T-cell (primary cell): ENCODE measurements at regions of chr6 and their contacts with region 1.

Region 1: GRCh38 chr6:110389689-110390382 is 25.5 kb downstream of the DDO start:
- DNase-seq: peak in 2 of 35 experiments; percentile 4 to 9
- ATAC-seq: peak in 2 of 4 experiments; percentile 26 to 49
- H3K4me3 ChIP-seq: no peak overlapping the region
- H3K4me3 Mint-ChIP-seq: peak overlapping the region in 1 of 3 donors; percentile 58
- H3K27ac ChIP-seq: peak overlapping the region; percentile 6
- H3K27ac Mint-ChIP-seq: peak overlapping the region; percentile 74 to 91
- H3K4me1 ChIP-seq: peaks cover 9 to 21% of the 10 kb centered on the region in 2 experiments
- H3K4me1 Mint-ChIP-seq: peaks cover 20 to 26% (median 22%) of the 10 kb centered on the region in 3 donors
- H3K27me3 ChIP-seq: no peaks in the 10 kb centered on the region
- H3K27me3 Mint-ChIP-seq: peaks cover 0 to 4% of the 10 kb centered on the region in 2 donors

Region 2: GRCh38 chr6:109705258-109705657 is 684.6 kb before region 1 on chr6:
- CTCF ChIA-PET with region 1: interaction called, 3 to 14 read pairs
- POLR2A ChIA-PET with region 1: no interaction called
- DNase-seq: peak; percentile 41 to 87 (median 67)
- ATAC-seq: peak; percentile 87 to 96 (median 90)
- H3K4me3 ChIP-seq: no peak overlapping the region
- H3K4me3 Mint-ChIP-seq: no peak overlapping the region
- H3K27ac ChIP-seq: no peak overlapping the region
- H3K27ac Mint-ChIP-seq: peak overlapping the region in 1 of 2 donors; percentile 11
- H3K4me1 ChIP-seq: peaks cover 3 to 4% of the 10 kb centered on the region in 2 experiments
- H3K4me1 Mint-ChIP-seq: peaks cover 30 to 42% (median 33%) of the 10 kb centered on the region in 3 donors
- H3K27me3 ChIP-seq: no peaks in the 10 kb centered on the region
- H3K27me3 Mint-ChIP-seq: no peaks in the 10 kb centered on the region

Region 3: DNA sequence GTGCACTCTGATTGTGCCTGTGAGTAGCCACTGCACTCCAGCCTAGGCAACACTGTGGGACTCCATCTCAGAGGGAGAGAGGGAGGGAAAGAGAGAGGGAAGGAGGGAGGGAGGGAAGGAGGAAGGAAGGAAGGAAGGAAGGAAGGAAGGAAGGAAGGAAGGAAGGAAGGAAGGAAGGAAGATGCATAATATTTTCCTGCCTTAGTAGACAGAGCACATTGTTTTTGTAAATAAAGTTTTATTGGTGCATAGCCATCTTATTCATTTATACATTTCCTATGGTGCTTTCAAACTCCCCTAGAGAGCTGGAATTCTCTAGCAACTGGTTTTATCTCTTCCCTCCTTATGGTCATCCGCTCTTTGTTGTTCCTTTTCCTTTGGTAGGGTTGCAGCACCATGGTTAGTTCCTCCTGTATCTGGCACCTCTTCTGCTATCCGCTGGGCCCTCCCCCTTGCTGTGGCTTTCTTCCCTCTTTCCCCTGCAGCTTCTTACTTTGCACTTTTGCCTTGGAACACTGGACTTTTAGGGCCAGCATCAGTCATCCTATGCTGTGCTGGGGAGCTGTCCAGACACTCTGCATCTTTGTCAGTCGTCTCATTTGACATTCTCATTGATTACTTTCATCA is 391.6 kb before region 1 on chr6:
- CTCF ChIA-PET with region 1: no interaction called
- POLR2A ChIA-PET with region 1: no interaction called
- DNase-seq: no peak
- ATAC-seq: no peak
- H3K4me3 ChIP-seq: no peak overlapping the region
- H3K4me3 Mint-ChIP-seq: no peak overlapping the region
- H3K27ac ChIP-seq: no peak overlapping the region
- H3K27ac Mint-ChIP-seq: no peak overlapping the region
- H3K4me1 ChIP-seq: no peaks in the 10 kb centered on the region
- H3K4me1 Mint-ChIP-seq: no peaks in the 10 kb centered on the region
- H3K27me3 ChIP-seq: peaks cover 2 to 13% of the 10 kb centered on the region in 2 experiments
- H3K27me3 Mint-ChIP-seq: peaks cover 29 to 30% of the 10 kb centered on the region in 2 donors

Region 4: DNA sequence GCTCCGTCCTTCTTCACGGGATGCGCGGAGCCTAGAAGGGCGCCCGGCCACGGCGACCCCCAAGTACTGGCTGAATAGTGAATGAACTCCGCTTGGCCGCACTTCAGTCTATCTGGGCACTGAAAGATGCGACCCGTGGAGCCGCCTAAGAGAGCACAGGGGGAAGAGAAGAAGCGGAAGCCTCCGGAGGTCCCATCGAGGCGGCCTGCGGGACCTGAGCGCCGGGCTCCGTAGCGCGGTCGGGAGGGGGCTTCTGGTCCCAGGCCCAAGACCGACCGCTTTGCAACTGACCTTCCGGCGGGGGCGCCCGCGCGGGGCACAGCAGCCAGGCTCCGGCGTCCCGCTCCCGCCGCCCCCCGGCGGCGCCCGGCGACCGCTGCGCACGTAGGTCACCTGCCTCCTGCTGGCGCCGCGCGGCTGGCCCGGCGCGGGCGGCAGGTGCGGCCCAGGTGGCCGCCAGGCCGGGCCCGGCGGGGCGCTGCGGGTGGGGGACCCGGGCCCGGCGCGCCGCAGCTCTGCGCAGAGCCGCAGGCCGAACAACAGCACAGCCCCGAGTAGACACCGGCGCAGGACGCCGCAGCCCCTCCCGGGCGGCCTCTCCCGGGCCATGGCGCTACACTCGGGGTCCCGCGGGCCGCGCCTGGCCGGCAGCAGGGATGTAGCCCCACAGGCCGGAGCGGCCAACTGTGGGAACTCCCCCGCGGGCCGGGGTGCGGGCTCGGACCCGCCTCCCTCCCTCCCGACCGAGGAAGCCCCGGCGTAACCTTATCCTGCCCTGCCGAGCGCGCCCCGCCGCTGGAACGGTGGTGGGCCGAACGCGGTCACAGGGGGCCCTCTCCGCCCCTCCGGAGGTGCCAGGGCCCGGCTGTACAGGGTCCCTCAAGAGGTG is 31.9 kb before region 1 on chr6 and contains the start of gene METTL24:
- CTCF ChIA-PET with region 1: no interaction called
- POLR2A ChIA-PET with region 1: no interaction called
- DNase-seq: peak in 9 of 35 experiments; percentile 2 to 24 (median 10)
- ATAC-seq: peak; percentile 59 to 77 (median 68)
- H3K4me3 ChIP-seq: peak within 1 kb of the TSS; percentile 49 to 74
- H3K4me3 Mint-ChIP-seq: peak within 1 kb of the TSS; percentile 77 to 83 (median 81)
- H3K27ac ChIP-seq: no peak within 1 kb of the TSS
- H3K27ac Mint-ChIP-seq: peak within 1 kb of the TSS; percentile 26 to 50
- H3K4me1 ChIP-seq: peaks cover 0 to 11% of the 10 kb centered on the region in 2 experiments
- H3K4me1 Mint-ChIP-seq: peaks cover 13 to 21% (median 17%) of the 10 kb centered on the region in 3 donors
- H3K27me3 ChIP-seq: peaks cover 0 to 25% of the 10 kb centered on the region in 2 experiments
- H3K27me3 Mint-ChIP-seq: peaks cover 44 to 57% of the 10 kb centered on the region in 2 donors
- total RNA-seq, gene METTL24: 0.30 to 0.47 (median 0.33) TPM in 3 of 5 donors, not detected in the others

Region 5: DNA sequence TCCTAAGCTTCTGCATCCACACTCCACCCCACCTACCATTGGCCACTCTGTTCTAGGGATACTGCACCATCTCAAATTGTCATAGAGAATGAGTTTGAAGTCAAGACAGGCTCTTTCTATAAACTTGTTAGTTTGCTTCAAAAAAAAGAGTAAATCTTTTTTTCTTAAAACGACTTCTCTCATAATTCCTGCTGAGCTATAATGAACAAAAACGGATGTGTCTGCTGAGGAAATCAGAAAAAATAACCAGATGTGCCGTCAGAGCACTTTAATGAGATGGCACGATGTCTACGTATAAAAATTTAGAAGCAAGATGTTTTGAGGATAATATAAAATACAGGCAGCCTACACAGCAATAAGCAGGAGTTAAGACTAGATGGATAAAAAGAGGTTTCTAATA is 49.5 kb after region 1 on chr6:
- CTCF ChIA-PET with region 1: no interaction called
- POLR2A ChIA-PET with region 1: no interaction called
- DNase-seq: no peak
- ATAC-seq: no peak
- H3K4me3 ChIP-seq: no peak overlapping the region
- H3K4me3 Mint-ChIP-seq: no peak overlapping the region
- H3K27ac ChIP-seq: no peak overlapping the region
- H3K27ac Mint-ChIP-seq: no peak overlapping the region
- H3K4me1 ChIP-seq: no peaks in the 10 kb centered on the region
- H3K4me1 Mint-ChIP-seq: no peaks in the 10 kb centered on the region
- H3K27me3 ChIP-seq: peaks cover 0 to under 1% of the 10 kb centered on the region in 2 experiments
- H3K27me3 Mint-ChIP-seq: peaks cover 6 to 10% of the 10 kb centered on the region in 2 donors

Region 6: DNA sequence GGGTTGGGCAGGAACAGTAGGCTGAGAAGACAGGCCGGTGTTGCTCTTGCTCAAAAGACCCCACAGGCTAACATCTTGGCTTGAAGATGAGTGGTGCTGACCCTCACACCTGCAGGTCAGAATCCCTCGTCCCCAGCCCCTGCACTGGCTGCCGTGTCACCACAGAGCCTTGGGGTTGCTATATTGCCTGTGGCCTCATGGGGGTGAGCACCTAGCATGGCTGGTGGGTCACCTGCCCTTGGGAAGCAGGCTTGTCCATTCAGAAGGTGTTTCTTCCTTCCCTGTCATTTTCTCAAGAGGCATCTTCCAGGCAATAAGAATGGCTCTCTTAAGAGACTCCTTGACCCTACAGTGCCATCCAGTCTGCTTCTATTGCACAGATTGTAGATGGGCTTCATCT is 78.9 kb after region 1 on chr6:
- CTCF ChIA-PET with region 1: interaction called in 1 of 2 experiments, 10 read pairs
- POLR2A ChIA-PET with region 1: no interaction called
- DNase-seq: no peak
- ATAC-seq: no peak
- H3K4me3 ChIP-seq: no peak overlapping the region
- H3K4me3 Mint-ChIP-seq: no peak overlapping the region
- H3K27ac ChIP-seq: no peak overlapping the region
- H3K27ac Mint-ChIP-seq: no peak overlapping the region
- H3K4me1 ChIP-seq: no peaks in the 10 kb centered on the region
- H3K4me1 Mint-ChIP-seq: no peaks in the 10 kb centered on the region
- H3K27me3 ChIP-seq: peaks cover 0 to 11% of the 10 kb centered on the region in 2 experiments
- H3K27me3 Mint-ChIP-seq: peaks cover 20 to 23% of the 10 kb centered on the region in 2 donors